Uterus (tissue), 4 donors: ENCODE measurements at regions of chr17 and their contacts with region 1.

Region 1: GRCh38 chr17:29116804-29117772 is 63.1 kb downstream of the MYO18A start:
- DNase-seq: peak; percentile 61 to 68
- H3K4me3 ChIP-seq: no peak overlapping the region
- H3K27ac ChIP-seq: no peak overlapping the region
- H3K4me1 ChIP-seq: no peaks in the 10 kb centered on the region
- H3K27me3 ChIP-seq: no peaks in the 10 kb centered on the region
- CTCF ChIP-seq: peak; percentile 63 to 79 (median 74)
- POLR2A ChIP-seq: no peak

Region 2: DNA sequence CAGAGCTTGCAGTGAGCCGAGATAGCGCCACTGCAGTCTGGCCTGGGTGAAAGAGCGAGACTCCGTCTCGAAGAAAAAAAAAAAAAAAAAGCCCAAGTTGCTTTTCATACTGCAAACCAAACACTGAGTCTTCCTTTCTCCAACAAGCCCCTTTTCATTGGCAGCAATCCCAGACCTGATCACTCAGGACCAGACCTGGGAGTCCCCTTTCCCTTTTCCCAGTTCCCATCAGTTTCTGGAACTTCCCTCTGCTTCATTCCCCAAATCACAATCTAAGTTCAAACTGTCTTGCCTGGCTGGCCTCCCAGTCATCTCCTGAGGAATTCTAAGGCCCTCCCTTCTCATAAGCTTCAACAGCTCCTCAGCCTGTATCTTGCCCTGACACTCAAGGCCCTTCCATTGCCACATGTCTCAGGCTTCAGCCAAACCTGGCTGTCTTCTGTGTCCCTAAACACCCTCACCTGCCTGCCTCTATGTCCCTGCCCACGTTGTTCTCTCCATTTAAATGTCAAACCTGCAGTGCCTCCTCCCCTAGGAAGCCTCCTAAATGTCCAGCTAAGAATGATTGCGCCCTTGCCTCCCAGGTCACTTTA is 153.9 kb before region 1 on chr17:
- intact Hi-C with region 1: loop called (anchors 5 kb)
- DNase-seq: no peak
- H3K4me3 ChIP-seq: no peak overlapping the region
- H3K27ac ChIP-seq: no peak overlapping the region
- H3K4me1 ChIP-seq: no peaks in the 10 kb centered on the region
- H3K27me3 ChIP-seq: no peaks in the 10 kb centered on the region
- CTCF ChIP-seq: no peak
- POLR2A ChIP-seq: no peak

Region 3: GRCh38 chr17:29176558-29177351 is 59.7 kb after region 1 on chr17:
- intact Hi-C with region 1: no loop called
- DNase-seq: peak; percentile 59 to 69
- H3K4me3 ChIP-seq: peak overlapping the region; percentile 39 to 46
- H3K27ac ChIP-seq: peak overlapping the region; percentile 87 to 88
- H3K4me1 ChIP-seq: peaks cover 0 to 20% of the 10 kb centered on the region in 2 donors
- H3K27me3 ChIP-seq: no peaks in the 10 kb centered on the region
- CTCF ChIP-seq: no peak
- POLR2A ChIP-seq: no peak